ENCODE measurements at regions of chr2 and their contacts with region 1.

Region 1: DNA sequence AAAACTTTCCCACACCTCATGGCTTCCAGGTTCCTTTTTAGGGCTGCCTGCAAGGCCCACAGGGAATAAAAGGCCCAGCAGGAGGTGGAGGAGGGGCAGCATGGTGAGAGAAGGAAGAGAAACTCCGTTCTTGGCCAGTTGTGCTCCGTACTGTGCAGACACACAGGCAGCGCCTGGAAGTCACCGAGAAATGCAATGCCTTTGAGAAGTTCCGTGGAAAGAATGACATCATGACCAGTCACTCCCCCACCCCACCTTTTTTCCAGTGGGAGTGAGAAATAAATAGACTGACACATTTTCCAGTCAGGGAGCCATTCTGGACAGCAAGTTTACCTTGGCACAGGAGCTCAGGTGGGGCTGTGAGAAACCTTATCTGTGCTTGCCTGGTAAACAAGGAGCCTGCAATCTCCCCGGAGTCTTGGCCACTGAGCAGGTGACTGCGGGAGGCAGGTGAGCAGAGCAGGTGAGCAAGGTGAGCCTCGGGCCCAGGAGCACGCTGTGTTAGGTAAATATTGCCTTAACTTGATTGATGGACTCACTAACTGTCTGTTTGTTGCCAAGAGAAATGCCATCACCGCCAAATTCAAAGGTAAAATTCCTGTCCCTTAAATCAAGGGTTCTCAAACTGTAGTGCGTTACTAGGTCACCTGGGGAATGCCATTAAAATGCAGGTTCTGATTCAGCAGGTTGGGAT is 13.5 kb upstream of the LBH start:
- DNase-seq: peak; percentile 48
- ATAC-seq: peak; percentile 33
- H3K4me3 ChIP-seq: peak overlapping the region in 1 of 2 experiments; percentile 29; a peak in 1 of 4 replicates
- H3K27ac ChIP-seq: peak overlapping the region; percentile 55
- H3K4me1 ChIP-seq: peaks cover 25 to 37% of the 10 kb centered on the region in 2 experiments
- H3K27me3 ChIP-seq: peaks cover 5% of the 10 kb centered on the region; the same call in 1 of the 2 replicates
- CTCF ChIP-seq: no peak
- POLR2A ChIP-seq: no peak
- RAD21 ChIP-seq: peak; percentile 31; the same call in 1 of the 2 replicates

Region 2: GRCh38 chr2:30139131-30139870 is 78.5 kb before region 1 on chr2:
- CTCF ChIA-PET with region 1: no interaction called
- POLR2A ChIA-PET with region 1: no interaction called
- RAD21 ChIA-PET with region 1: no interaction called
- intact Hi-C with region 1: no loop called
- DNase-seq: no peak
- ATAC-seq: no peak
- H3K4me3 ChIP-seq: no peak overlapping the region
- H3K27ac ChIP-seq: no peak overlapping the region
- H3K4me1 ChIP-seq: no peaks in the 10 kb centered on the region
- H3K27me3 ChIP-seq: 0 out of 2 replicates have a peak, but pooled peaks cover 4% of the 10 kb centered on the region
- CTCF ChIP-seq: no peak
- POLR2A ChIP-seq: no peak
- RAD21 ChIP-seq: no peak

Region 3: DNA sequence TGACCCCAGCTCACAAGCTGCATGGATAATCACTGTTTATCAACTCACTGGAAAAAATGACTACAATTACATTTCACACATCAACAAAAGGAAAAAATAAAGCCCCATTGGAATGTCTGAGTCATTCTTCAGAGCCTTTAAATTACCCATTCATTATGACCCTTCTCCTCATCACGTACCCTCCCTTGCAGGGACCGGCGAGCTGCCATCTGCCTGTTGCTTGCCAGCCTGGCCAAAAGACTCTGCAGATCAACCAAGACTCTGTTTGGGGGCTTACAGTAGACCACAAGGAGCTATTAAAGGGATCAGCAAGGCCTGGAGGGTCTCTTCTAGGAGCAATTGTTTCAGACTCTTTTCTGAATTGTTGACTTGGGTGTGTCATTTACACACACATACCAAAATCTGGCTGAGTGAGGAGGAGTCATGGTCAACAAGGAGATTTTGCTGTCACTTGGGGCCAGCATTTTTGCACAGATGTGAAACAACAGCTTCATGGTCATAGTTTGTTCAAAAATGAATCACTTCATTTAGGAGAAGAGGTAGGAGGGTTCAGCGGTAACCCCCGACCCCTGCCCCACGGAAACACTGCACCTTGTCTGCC is 55.6 kb after region 1 on chr2:
- CTCF ChIA-PET with region 1: no interaction called
- POLR2A ChIA-PET with region 1: no interaction called
- RAD21 ChIA-PET with region 1: no interaction called
- intact Hi-C with region 1: no loop called
- DNase-seq: no peak
- ATAC-seq: peak; percentile 64
- H3K4me3 ChIP-seq: no peak overlapping the region
- H3K27ac ChIP-seq: no peak overlapping the region; the same call in 1 of the 2 replicates
- H3K4me1 ChIP-seq: peaks cover 22 to 28% of the 10 kb centered on the region in 2 experiments
- H3K27me3 ChIP-seq: no peaks in the 10 kb centered on the region
- CTCF ChIP-seq: no peak
- POLR2A ChIP-seq: no peak
- RAD21 ChIP-seq: no peak

Region 4: DNA sequence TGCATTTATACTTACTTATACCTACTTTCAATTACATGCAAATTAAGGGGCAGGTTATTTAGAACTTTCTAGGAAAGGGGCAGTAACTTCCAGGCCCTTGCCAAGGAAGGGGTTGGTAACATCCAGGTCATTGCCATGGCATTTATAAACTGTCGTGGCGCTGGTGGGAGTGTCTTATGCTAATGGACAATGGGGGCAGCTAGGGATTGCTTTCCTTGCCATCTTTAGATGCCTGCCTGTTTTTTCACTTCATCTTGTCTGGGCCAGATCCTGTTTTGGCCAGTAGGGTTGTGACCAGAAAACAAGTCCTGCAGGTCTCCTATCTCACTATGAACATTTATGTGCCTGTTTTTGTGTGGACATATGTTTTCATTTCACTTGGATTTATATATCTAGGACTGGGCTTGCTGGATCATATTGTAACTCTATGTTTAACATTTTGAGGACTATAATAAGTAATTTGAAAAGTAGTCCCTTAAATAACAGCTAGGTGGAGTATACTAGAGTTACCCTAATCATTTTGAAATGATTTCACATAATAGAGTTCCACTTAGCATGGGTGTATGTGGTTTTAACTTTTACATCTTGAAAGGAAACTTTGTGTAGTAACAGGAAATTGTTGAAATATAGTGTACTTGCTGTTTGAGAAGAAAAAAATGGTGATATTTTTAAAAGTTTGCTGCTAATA is 285.4 kb after region 1 on chr2:
- CTCF ChIA-PET with region 1: no interaction called
- POLR2A ChIA-PET with region 1: no interaction called
- RAD21 ChIA-PET with region 1: interaction called in 1 of 2 experiments, 4 read pairs
- intact Hi-C with region 1: loop called (anchors 10 kb)
- DNase-seq: no peak
- ATAC-seq: no peak; the same call in 1 of the 2 replicates
- H3K4me3 ChIP-seq: no peak overlapping the region
- H3K27ac ChIP-seq: no peak overlapping the region
- H3K4me1 ChIP-seq: peaks cover 0 to 6% of the 10 kb centered on the region in 2 experiments; a peak in 1 of 4 replicates
- H3K27me3 ChIP-seq: no peaks in the 10 kb centered on the region
- CTCF ChIP-seq: peak; percentile 19 to 34 (median 23); a peak in 4 of 6 replicates
- POLR2A ChIP-seq: no peak
- RAD21 ChIP-seq: 0 out of 2 replicates have a peak, but pooled peaks have one; percentile 16

Measured in HCT116 (cell line).